Motor neuron (in vitro differentiated cells): ENCODE measurements at regions of chr10 and their contacts with region 1.

Region 1: DNA sequence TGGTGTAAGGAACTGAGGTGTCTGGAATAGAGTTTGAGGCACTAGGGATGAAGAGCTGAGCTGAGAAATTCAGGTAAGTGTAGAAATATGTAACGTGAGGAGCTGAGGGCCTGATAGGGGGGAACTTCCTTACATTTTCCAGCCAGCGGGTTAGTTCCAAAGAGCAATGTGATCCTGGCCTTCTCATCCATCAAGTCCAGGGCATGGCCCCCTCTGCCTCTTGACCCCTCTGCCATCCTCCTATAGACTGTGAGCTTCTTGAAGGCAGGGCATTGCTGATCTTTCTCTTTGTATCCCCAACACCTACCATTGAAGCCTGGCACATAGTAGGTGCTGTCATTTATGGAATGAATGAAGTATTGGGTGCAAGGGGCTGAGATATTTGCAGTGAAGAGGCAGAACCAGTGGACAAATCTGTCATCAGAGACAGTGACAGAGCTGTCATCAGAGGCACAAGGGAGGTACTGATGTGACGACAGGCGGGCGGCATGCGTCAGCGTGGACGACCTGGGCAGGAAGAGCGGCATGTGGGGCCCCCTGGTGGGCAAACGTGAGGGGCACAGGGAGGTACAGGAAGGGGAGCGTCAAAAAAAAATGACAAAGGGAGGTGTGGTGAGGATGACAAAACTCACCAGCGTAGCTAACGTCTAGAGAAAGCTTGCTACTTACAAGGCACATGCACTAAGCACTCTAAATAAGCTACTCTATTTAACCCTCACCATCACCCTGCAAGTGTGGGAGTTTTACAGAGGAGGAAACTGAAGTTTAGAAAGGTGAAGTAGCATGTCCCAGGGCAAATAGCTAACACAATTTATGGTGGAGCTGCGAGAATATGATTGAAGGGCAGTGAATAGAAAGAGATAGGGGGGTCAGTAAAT is 5.2 kb upstream of the CAMK2G start:
- ATAC-seq: peak; percentile 83 to 95 (median 88)
- H3K4me3 ChIP-seq: no peak overlapping the region
- H3K27ac ChIP-seq: no peak overlapping the region
- H3K4me1 ChIP-seq: no peaks in the 10 kb centered on the region

Region 2: GRCh38 chr10:73225518-73225917 is 654.0 kb before region 1 on chr10:
- in situ Hi-C with region 1: no loop called
- ATAC-seq: no peak
- H3K4me3 ChIP-seq: no peak overlapping the region
- H3K27ac ChIP-seq: no peak overlapping the region
- H3K4me1 ChIP-seq: no peaks in the 10 kb centered on the region

Region 3: DNA sequence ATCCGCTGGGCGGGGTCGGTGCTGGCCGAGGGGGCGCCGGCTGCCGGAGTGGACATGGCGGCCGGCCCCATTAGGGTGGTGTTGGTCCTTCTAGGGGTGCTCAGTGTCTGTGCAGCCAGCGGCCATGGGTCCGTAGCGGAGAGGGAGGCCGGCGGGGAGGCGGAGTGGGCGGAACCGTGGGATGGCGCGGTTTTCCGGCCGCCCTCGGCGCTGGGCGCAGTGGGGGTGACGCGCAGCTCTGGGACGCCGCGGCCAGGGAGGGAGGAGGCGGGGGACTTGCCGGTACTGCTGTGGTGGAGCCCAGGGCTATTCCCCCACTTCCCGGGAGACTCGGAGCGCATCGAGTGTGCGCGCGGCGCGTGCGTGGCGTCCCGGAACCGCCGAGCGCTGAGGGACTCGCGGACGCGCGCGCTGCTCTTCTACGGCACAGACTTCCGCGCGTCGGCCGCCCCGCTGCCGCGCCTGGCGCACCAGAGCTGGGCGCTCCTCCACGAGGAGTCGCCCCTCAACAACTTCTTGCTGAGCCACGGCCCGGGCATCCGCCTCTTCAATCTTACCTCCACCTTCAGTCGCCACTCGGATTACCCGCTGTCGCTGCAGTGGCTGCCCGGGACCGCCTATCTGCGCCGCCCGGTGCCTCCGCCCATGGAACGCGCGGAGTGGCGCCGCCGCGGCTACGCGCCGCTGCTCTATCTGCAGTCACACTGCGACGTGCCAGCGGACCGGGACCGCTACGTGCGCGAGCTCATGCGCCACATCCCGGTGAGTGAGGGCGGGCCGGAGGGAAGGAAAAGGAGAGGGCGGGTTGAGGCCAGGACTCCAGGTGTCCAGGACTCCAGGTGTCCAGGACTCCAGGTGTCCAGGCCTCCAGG is 107.0 kb before region 1 on chr10:
- in situ Hi-C with region 1: no loop called
- ATAC-seq: peak; percentile 74 to 89 (median 85)
- H3K4me3 ChIP-seq: peak overlapping the region; percentile 74 to 92 (median 77)
- H3K27ac ChIP-seq: peak overlapping the region; percentile 95 to 96
- H3K4me1 ChIP-seq: peaks cover 32 to 33% of the 10 kb centered on the region in 2 donors

Region 4: GRCh38 chr10:73940634-73941221 is 61.2 kb after region 1 on chr10:
- in situ Hi-C with region 1: loop called in 1 of 9 experiments (anchors 10 kb)
- ATAC-seq: peak; percentile 69 to 100 (median 84)
- H3K4me3 ChIP-seq: no peak overlapping the region
- H3K27ac ChIP-seq: peak overlapping the region in 1 of 2 donors; percentile 28
- H3K4me1 ChIP-seq: peaks cover 4 to 9% of the 10 kb centered on the region in 2 donors

Region 5: GRCh38 chr10:74081192-74081803 is 201.8 kb after region 1 on chr10:
- in situ Hi-C with region 1: loop called in 6 of 9 experiments (anchors 10 to 25 kb)
- ATAC-seq: peak; percentile 50 to 79 (median 64)
- H3K4me3 ChIP-seq: no peak overlapping the region
- H3K27ac ChIP-seq: no peak overlapping the region
- H3K4me1 ChIP-seq: peaks cover 0 to 2% of the 10 kb centered on the region in 2 donors

Region 6: GRCh38 chr10:74244097-74244685 is 364.7 kb after region 1 on chr10:
- in situ Hi-C with region 1: loop called in 1 of 9 experiments (anchors 25 kb)
- ATAC-seq: no peak
- H3K4me3 ChIP-seq: no peak overlapping the region
- H3K27ac ChIP-seq: no peak overlapping the region
- H3K4me1 ChIP-seq: no peaks in the 10 kb centered on the region